Keratinocyte (primary cell): ENCODE measurements at regions of chr4 and their contacts with region 1.

Region 1: GRCh38 chr4:83639849-83640493 is 104.1 kb downstream of the GPAT3 start:
- DNase-seq: peak; percentile 30
- H3K4me3 ChIP-seq: no peak overlapping the region
- H3K27ac ChIP-seq: no peak overlapping the region
- H3K4me1 ChIP-seq: no peaks in the 10 kb centered on the region
- H3K27me3 ChIP-seq: peaks cover 4% of the 10 kb centered on the region
- CTCF ChIP-seq: peak; percentile 62 to 78 (median 74)

Region 2: DNA sequence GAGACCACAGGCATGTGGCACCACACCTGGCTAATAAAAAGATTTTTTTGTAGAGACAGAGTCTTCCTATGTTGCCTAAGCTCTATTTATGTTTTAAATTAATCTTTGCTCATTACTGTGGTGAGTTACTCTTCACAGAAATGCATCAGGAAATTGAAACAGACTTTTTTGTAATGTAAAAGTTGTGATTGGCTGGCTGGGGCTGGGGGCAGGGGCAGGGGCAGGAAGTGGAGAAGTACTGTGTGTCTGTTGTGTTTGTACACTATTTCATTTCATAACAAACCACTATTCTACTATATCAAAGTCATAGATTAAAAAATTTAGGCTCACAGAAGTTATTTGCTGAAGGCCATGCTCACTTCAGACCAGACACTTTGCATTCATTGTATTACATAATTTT is 136.0 kb before region 1 on chr4:
- dilution Hi-C with region 1: loop called (anchors 10 kb)
- DNase-seq: no peak
- H3K4me3 ChIP-seq: no peak overlapping the region
- H3K27ac ChIP-seq: no peak overlapping the region
- H3K4me1 ChIP-seq: no peaks in the 10 kb centered on the region
- H3K27me3 ChIP-seq: no peaks in the 10 kb centered on the region
- CTCF ChIP-seq: no peak